Tibial artery (tissue), 4 donors: ENCODE measurements at regions of chr9 and their contacts with region 1.

Region 1: GRCh38 chr9:91101611-91102168 is 260.0 kb downstream of the AUH start:
- DNase-seq: no peak
- H3K4me3 ChIP-seq: no peak overlapping the region
- H3K27ac ChIP-seq: peak overlapping the region; percentile 39 to 62
- H3K4me1 ChIP-seq: peaks cover 0 to 24% (median 15%) of the 10 kb centered on the region in 4 donors
- H3K27me3 ChIP-seq: no peaks in the 10 kb centered on the region
- CTCF ChIP-seq: no peak

Region 2: GRCh38 chr9:91117959-91118703 is 16.4 kb after region 1 on chr9:
- intact Hi-C with region 1: loop called (anchors 2 kb)
- DNase-seq: peak; percentile 86 to 96
- H3K4me3 ChIP-seq: peak overlapping the region; percentile 26 to 42
- H3K27ac ChIP-seq: peak overlapping the region; percentile 72 to 83
- H3K4me1 ChIP-seq: peaks cover 0 to 46% (median 35%) of the 10 kb centered on the region in 4 donors
- H3K27me3 ChIP-seq: no peaks in the 10 kb centered on the region
- CTCF ChIP-seq: no peak

Region 3: GRCh38 chr9:91361291-91362050 is 259.8 kb after region 1 on chr9 and contains the start of gene AUH:
- intact Hi-C with region 1: no loop called
- DNase-seq: peak; percentile 71 to 92
- H3K4me3 ChIP-seq: peak within 1 kb of the TSS; percentile 90
- H3K27ac ChIP-seq: peak within 1 kb of the TSS; percentile 87 to 94
- H3K4me1 ChIP-seq: peaks cover 0 to 31% (median 20%) of the 10 kb centered on the region in 4 donors
- H3K27me3 ChIP-seq: no peaks in the 10 kb centered on the region
- CTCF ChIP-seq: no peak